Left lung (tissue), 14 donors: ENCODE measurements at regions of chr13 and their contacts with region 1.

Region 1: GRCh38 chr13:111216166-111216960 is 101.3 kb downstream of the ARHGEF7 start:
- DNase-seq: peak in 1 of 4 donors; percentile 32
- ATAC-seq: peak; percentile 46
- H3K4me3 ChIP-seq: no peak overlapping the region
- H3K27ac ChIP-seq: no peak overlapping the region
- H3K4me1 ChIP-seq: peaks cover 14 to 31% of the 10 kb centered on the region in 2 donors
- H3K27me3 ChIP-seq: no peaks in the 10 kb centered on the region
- CTCF ChIP-seq: peak; percentile 20 to 22

Region 2: DNA sequence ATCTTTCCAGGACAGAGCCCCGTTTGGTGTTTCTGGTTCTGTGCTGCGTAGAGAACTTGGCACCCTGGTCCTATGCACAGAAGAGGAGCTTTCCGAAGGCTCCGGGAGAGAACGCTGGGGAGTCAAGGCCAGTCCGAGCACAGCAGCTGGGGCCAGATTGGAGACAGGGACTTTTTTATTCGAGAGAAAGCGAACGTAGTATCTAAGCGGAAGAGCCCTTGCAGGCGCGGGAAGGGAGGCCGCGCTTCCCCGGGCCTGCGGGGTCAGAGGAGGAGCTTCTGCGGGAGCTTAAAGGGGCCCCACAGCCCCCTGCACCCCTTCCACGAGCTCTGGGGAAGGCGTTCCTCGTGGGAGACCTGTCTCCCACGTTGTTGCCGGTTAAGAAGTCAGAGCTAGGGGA is 149.8 kb before region 1 on chr13:
- intact Hi-C with region 1: loop called in 1 of 2 experiments (anchors 5 kb)
- DNase-seq: peak in 2 of 4 donors; percentile 13 to 41
- ATAC-seq: no peak
- H3K4me3 ChIP-seq: no peak overlapping the region
- H3K27ac ChIP-seq: no peak overlapping the region
- H3K4me1 ChIP-seq: peaks cover 4 to 8% of the 10 kb centered on the region in 2 donors
- H3K27me3 ChIP-seq: peaks cover 0 to 44% of the 10 kb centered on the region in 2 donors
- CTCF ChIP-seq: no peak